HAP-1 (cell line): ENCODE measurements at regions of chr16 and their contacts with region 1.

Region 1: DNA sequence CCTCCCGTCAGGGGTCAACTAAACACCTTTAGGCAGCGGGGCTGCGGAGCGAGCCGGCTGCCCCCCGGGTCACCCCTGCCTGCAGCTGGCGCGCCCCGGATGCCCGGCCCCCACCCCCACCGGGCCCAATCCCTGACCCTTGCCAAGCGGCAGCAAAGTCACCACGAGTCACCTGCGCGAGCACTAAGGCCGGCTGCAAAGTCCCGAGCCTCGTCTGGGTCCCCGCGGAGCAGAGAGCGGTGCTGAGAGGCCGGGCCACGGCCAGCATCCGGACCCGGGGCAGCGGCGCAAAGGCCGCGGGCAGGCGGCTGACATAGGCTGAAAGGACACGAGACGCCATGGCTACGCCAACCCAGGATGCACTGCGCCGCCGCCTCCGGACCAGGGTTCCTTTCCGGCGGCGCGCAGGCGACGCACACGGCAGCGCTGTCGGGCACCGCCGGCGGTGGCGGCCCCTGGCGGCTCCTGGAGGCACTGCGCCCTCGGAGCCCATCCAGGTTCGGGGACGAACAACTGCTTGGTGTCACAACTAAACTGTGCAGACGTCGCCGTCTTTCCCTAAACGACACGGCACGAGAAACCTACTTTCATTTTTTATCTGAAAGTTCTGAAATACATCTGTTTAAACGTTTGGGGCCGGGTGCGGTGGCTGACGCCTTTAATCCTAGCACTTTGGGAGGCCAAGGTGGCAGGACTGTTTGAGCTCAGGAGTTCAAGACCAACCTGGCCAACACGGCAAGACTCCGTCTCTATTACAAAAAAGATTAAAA is at the start of gene NDUFAB1:
- DNase-seq: peak; percentile 75 to 91
- H3K4me3 ChIP-seq: peak within 1 kb of the TSS; percentile 96
- H3K4me1 ChIP-seq: peaks cover 28% of the 10 kb centered on the region
- H3K27me3 ChIP-seq: no peaks in the 10 kb centered on the region

Region 2: GRCh38 chr16:23534868-23535860 is 61.0 kb before region 1 on chr16:
- in situ Hi-C with region 1: no loop called
- DNase-seq: no peak
- H3K4me3 ChIP-seq: no peak overlapping the region
- H3K4me1 ChIP-seq: no peaks in the 10 kb centered on the region
- H3K27me3 ChIP-seq: no peaks in the 10 kb centered on the region

Region 3: GRCh38 chr16:23640931-23641765 is 45.0 kb after region 1 on chr16 and contains the starts of genes DCTN5 and PALB2:
- in situ Hi-C with region 1: loop called (anchors 5 kb)
- DNase-seq: peak; percentile 92 to 95
- H3K4me3 ChIP-seq: peak within 1 kb of the TSS; percentile 73
- H3K4me1 ChIP-seq: 0 out of 2 replicates have a peak, but pooled peaks cover 3% of the 10 kb centered on the region
- H3K27me3 ChIP-seq: no peaks in the 10 kb centered on the region

Region 4: GRCh38 chr16:23959072-23959751 is 363.1 kb after region 1 on chr16:
- in situ Hi-C with region 1: no loop called
- DNase-seq: no peak
- H3K4me3 ChIP-seq: no peak overlapping the region
- H3K4me1 ChIP-seq: no peaks in the 10 kb centered on the region
- H3K27me3 ChIP-seq: no peaks in the 10 kb centered on the region